H1 (cell line): ENCODE measurements at regions of chr3 and their contacts with region 1.

Region 1: GRCh38 chr3:52238761-52239701 is at the start of gene TWF2:
- DNase-seq: peak in 1 of 2 experiments; percentile 87
- H3K4me3 ChIP-seq: peak within 1 kb of the TSS; percentile 72 to 95 (median 91)
- H3K27ac ChIP-seq: peak within 1 kb of the TSS; percentile 61; the same call in 1 of the 2 replicates
- H3K4me1 ChIP-seq: peaks cover 15 to 42% (median 28%) of the 10 kb centered on the region in 4 experiments
- H3K27me3 ChIP-seq: peaks cover 0 to 6% (median 3%) of the 10 kb centered on the region in 4 experiments; a peak in 3 of 7 replicates
- CTCF ChIP-seq: peak in 2 of 3 experiments; percentile 38 to 40; a peak in 2 of 4 replicates
- EP300 ChIP-seq: no peak
- POLR2A ChIP-seq: peak in 1 of 2 experiments; percentile 75; a peak in 2 of 3 replicates
- RAD21 ChIP-seq: peak in 1 of 2 experiments; percentile 14; a peak in 1 of 4 replicates
- total RNA-seq, gene TWF2: 62.6 and 65.2 TPM in 2 replicates

Region 2: GRCh38 chr3:52136513-52136912 is 102.5 kb before region 1 on chr3:
- CTCF ChIA-PET with region 1: no interaction called
- POLR2A ChIA-PET with region 1: no interaction called
- DNase-seq: no peak
- H3K4me3 ChIP-seq: no peak overlapping the region
- H3K27ac ChIP-seq: no peak overlapping the region
- H3K4me1 ChIP-seq: no peaks in the 10 kb centered on the region
- H3K27me3 ChIP-seq: no peaks in the 10 kb centered on the region
- CTCF ChIP-seq: no peak
- EP300 ChIP-seq: no peak
- POLR2A ChIP-seq: no peak
- RAD21 ChIP-seq: no peak

Region 3: DNA sequence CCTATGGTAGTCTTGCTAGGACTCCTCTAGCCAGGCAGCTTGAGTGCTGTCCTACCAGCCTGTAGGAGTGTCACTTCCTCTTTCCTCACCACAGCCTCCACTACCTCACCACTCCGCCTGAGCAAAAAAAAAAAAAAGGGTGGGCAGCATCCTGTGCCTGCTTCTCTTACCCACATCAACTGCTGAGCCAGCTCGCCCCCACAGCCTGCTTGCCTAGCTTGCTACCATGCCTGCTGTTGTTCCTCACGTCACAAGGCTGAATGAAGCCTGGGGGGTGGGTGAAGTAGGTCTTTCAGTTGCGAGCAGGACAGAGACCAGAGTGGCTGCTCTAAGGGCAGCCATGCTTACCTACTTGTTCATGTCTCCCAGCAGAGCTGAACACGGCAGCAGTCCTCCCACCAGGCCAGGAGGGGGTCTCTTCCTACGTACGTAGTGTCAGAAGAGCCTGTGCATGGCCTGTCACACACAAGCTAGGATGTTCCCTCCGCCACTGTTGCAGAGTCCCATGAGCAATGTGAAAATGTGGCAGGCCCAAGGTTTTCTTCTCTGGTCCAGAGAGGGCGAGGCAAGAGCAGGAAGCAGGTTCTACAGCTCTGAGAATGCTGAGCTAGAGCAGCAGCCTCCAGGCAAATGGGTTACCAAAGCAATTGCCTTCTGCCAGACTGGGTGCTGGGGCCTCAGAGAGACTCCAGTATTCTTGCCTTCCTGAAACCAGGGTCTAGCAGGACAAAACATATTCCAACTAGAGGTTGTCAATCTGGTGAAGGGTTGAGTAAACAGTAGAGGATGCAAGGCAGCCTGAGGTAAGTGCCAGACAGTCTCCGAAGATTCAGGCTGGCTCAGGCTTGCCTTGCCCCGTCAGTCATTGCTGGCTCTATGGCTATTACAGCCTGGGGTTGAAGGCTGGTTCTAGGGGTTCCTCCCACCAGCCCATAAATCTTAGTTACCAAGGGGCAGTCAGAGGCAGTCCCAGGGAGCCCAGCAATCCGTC is 14.6 kb after region 1 on chr3:
- CTCF ChIA-PET with region 1: interaction called, 19 read pairs
- POLR2A ChIA-PET with region 1: interaction called, 25 read pairs
- DNase-seq: no peak
- H3K4me3 ChIP-seq: no peak overlapping the region
- H3K27ac ChIP-seq: no peak overlapping the region
- H3K4me1 ChIP-seq: no peaks in the 10 kb centered on the region
- H3K27me3 ChIP-seq: no peaks in the 10 kb centered on the region
- CTCF ChIP-seq: no peak
- EP300 ChIP-seq: no peak
- POLR2A ChIP-seq: no peak
- RAD21 ChIP-seq: no peak

Region 4: DNA sequence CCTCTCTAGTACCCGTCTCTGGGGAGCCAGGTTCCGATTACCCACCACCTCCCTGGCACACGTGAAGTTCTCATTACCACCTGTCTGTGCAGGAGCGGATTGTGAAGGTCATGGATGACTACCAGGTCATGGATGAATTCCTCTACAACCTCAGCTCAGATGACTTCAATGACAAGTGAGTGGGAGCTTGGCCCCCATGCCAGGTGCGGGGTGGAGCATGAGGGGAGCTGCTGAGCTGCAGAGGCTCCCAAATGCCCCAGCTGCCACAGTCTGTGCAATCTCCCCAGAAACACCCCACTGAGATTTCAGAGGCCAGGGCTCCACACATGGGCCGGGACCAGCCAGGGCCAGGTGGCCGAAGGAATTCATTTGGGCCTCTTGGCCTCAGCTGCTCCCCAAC is 111.4 kb after region 1 on chr3:
- CTCF ChIA-PET with region 1: no interaction called
- POLR2A ChIA-PET with region 1: no interaction called
- DNase-seq: no peak
- H3K4me3 ChIP-seq: no peak overlapping the region
- H3K27ac ChIP-seq: no peak overlapping the region
- H3K4me1 ChIP-seq: no peaks in the 10 kb centered on the region
- H3K27me3 ChIP-seq: no peaks in the 10 kb centered on the region
- CTCF ChIP-seq: no peak
- EP300 ChIP-seq: no peak
- POLR2A ChIP-seq: no peak
- RAD21 ChIP-seq: no peak